ENCODE measurements at regions of chr2 and their contacts with region 1.

Region 1: GRCh38 chr2:218269899-218270720 is at the starts of genes AAMP and PNKD:
- DNase-seq: peak; percentile 100
- ATAC-seq: peak; percentile 89
- H3K4me3 ChIP-seq: peak within 1 kb of the TSS; percentile 92 to 93
- H3K27ac ChIP-seq: peak within 1 kb of the TSS; percentile 55 to 88 (median 81)
- H3K4me1 ChIP-seq: peaks cover 68% of the 10 kb centered on the region
- H3K27me3 ChIP-seq: no peaks in the 10 kb centered on the region
- CTCF ChIP-seq: peak in 4 of 7 experiments; percentile 22 to 37 (median 24)
- POLR2A ChIP-seq: peak; percentile 54 to 86 (median 84)
- total RNA-seq, gene AAMP: 61.5 to 114 TPM
- total RNA-seq, gene PNKD: 17.1 to 21.3 TPM

Region 2: GRCh38 chr2:218659258-218659987 is 389.3 kb after region 1 on chr2 and contains the starts of genes BCS1L and ZNF142:
- intact Hi-C with region 1: loop called (anchors 10 kb)
- DNase-seq: peak; percentile 87 to 94 (median 91)
- ATAC-seq: peak; percentile 96
- H3K4me3 ChIP-seq: peak within 1 kb of the TSS; percentile 39 to 80
- H3K27ac ChIP-seq: peak within 1 kb of the TSS; percentile 27 to 77 (median 62)
- H3K4me1 ChIP-seq: peaks cover 27% of the 10 kb centered on the region
- H3K27me3 ChIP-seq: no peaks in the 10 kb centered on the region
- CTCF ChIP-seq: no peak
- POLR2A ChIP-seq: peak; percentile 14 to 64 (median 63)
- total RNA-seq, gene BCS1L: 34.2 to 64.3 TPM
- total RNA-seq, gene ZNF142: 12.2 to 14.3 TPM